Activated CD4-positive, alpha-beta T cell treated with anti-CD3 and anti-CD28 coated beads, Interleukin-2, amount 10 ng/mL, durations not matched to agents 24 days and 14 days (primary cell): ENCODE measurements at regions of chr19 and their contacts with region 1.

Region 1: DNA sequence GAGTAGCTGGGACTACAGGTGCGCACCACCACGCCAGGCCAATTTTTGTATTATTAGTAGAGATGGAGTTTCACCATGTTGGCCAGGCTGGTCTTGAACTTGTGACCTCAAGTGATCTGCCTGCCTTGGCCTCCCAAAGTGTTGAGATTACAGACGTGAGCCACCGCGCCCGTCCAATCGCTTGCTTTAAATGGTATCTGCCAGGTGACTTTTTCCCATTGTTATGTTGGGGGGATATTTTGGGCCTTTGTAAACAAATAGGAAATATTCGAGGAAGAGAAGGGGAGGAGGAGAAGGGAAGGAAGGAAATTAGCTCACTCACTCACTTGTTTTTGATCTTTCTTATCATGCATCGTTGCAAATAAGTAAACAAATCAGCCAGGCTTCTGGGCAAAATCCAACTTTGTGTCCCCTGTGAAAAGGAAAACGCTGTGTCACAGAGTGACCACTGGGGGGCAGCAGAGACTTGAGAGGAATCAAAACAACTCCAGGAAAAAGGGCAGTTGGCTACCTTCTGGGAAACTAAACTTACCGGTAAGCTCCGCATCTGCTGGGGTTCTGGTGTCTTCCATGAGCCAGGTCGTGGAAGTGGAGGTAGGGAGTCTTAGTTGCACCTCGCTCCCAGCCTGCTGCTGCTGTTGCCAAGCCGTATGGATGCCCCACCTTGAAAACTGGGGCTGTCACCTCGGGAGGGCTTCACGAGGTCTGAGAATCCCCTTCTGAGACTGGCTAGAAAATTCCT is 9.3 kb upstream of the RANBP3 start:
- DNase-seq: peak; percentile 91
- H3K4me3 Mint-ChIP-seq: peak overlapping the region; percentile 68
- H3K27ac Mint-ChIP-seq: peak overlapping the region; percentile 42
- H3K4me1 Mint-ChIP-seq: peaks cover 38% of the 10 kb centered on the region
- H3K27me3 Mint-ChIP-seq: no peaks in the 10 kb centered on the region

Region 2: GRCh38 chr19:5997371-5997770 is 10.1 kb after region 1 on chr19:
- intact Hi-C with region 1: no loop called
- DNase-seq: no peak
- H3K4me3 Mint-ChIP-seq: no peak overlapping the region
- H3K27ac Mint-ChIP-seq: no peak overlapping the region
- H3K4me1 Mint-ChIP-seq: peaks cover 2% of the 10 kb centered on the region
- H3K27me3 Mint-ChIP-seq: no peaks in the 10 kb centered on the region

Region 3: DNA sequence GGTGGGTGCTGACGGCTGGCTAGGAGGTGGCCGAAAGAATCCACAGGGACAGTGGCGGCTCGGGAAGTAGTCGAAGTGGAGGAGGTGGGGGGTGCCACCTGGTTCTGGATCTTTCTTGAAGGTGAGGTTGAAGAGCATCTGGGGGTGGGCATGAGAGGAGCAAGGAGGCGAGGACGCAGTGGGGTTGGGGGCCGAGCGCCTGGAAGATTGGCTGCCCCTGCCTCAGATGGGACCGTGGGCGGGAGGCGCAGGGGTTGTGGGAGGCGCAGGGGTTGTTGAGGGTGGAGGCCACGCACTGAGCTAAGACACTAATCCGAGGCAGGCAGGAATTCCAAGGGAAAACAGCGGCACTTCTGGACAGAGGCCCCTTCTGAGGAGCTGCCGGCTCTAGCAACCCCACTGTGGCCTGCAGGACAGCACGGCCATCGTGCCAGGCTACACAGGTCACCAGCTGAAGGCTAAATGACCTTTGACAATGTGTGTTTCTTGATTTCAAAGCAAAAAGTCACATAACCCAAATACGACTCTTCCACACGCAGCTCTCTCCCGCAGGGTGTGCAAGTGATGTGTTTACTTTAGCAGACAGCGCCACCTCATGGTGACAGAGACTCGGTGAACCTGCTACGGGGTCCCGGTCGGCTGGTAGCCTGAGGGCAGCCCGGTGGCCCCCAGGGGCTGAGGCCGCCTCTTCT is 34.8 kb after region 1 on chr19:
- intact Hi-C with region 1: loop called (anchors 1 kb)
- DNase-seq: peak; percentile 94
- H3K4me3 Mint-ChIP-seq: no peak overlapping the region
- H3K27ac Mint-ChIP-seq: no peak overlapping the region
- H3K4me1 Mint-ChIP-seq: no peaks in the 10 kb centered on the region
- H3K27me3 Mint-ChIP-seq: no peaks in the 10 kb centered on the region

Region 4: GRCh38 chr19:6171566-6171965 is 184.3 kb after region 1 on chr19:
- intact Hi-C with region 1: no loop called
- DNase-seq: no peak
- H3K4me3 Mint-ChIP-seq: no peak overlapping the region
- H3K27ac Mint-ChIP-seq: no peak overlapping the region
- H3K4me1 Mint-ChIP-seq: no peaks in the 10 kb centered on the region
- H3K27me3 Mint-ChIP-seq: peaks cover 29% of the 10 kb centered on the region